RWPE1 (cell line): ENCODE measurements at regions of chr1 and their contacts with region 1.

Region 1: GRCh38 chr1:25895365-25895993 is 10.7 kb downstream of the STMN1 start:
- DNase-seq: peak; percentile 94
- H3K27ac ChIP-seq: peak overlapping the region; percentile 99
- CTCF ChIP-seq: peak; percentile 94

Region 2: DNA sequence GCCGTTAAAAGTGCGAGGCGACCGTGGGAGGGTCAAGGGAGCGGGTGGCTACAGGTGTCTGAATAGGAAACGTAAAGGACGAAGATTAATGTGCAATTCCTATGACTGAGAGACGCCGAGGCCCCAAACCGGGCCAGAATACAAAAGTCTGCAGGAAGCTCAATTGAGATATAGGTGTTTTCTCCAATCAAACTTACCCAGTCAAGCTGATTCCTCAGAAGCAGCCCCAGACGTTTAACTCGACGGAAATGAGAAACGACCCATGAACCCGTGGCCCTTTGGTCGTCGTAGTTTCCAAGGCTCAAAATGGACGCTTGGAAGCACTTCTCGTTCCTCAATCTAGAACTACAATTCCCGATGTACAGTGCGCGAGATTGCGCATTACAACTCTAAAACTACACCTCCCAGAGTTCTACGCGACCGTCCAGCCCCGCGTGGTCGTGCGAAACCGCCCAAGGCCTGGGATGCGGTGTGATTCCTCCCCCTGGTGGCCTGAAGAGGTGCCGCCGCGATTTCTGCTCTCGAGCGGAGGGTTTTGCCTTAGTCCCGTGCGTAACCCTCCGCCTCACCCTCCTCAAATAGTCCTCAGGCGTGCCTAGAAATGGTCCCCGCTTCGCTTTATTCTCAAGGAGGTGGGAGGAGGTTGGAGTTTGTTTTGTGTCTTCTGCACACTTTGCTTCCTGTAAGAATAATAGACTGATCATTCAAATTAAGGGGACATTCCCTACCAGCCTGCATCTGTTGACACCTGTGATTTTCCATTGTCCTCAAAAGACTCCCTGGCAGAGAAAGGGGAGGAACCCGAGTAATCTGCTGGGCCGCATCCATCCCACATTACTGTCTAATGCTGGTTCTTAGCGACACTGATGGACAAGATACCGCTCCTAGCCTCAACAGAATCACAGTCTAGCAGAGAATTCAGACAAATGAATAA is 102.6 kb after region 1 on chr1 and contains the start of gene PAFAH2:
- CTCF ChIA-PET with region 1: interaction called, 12 read pairs
- POLR2A ChIA-PET with region 1: no interaction called
- DNase-seq: peak; percentile 96
- H3K27ac ChIP-seq: peak within 1 kb of the TSS; percentile 78
- CTCF ChIP-seq: peak; percentile 94

Region 3: DNA sequence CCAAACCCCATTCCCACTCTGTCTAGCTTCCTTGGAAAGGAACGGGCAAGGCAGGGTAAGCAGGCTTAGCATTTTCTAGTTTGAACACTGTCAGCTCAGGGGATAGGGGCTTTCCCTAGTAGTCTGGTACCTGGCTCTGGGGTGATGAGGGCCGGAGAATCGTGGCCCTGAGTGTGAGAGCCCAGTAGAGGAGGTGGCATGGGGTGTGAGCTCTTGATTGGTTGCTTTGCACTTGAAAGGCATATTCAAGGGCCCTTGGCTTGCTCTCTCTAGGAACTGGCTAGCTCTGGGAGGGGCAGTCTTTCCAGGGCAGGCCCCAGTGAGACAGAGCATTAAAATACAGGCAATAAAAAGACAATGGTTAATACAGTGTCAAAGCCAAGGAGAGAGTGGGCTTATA is 115.3 kb after region 1 on chr1:
- CTCF ChIA-PET with region 1: interaction called, 10 read pairs
- POLR2A ChIA-PET with region 1: no interaction called
- DNase-seq: no peak
- H3K27ac ChIP-seq: no peak overlapping the region
- CTCF ChIP-seq: no peak